Endothelial cell of umbilical vein (primary cell): ENCODE measurements at regions of chr3 and their contacts with region 1.

Region 1: DNA sequence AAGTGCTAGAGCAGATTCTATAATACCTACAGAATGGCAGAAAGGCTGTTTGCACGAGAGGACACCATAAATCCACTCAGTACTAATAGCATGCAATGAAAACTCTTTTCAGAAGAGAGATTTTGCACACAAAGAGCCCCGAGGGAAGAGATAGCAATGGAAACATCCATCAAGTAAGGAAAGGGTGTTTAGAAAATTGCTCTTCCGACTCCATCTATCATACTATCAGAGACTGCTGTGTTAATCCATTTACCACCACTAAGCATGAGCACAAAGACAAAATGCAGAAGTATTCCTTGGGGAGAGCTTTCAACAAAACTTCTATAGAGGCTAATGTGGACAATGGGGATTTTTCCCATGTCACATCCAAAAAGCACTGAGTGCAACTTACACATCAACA is 72.1 kb upstream of the PLAAT1 start:
- DNase-seq: no peak
- H3K4me3 ChIP-seq: no peak overlapping the region
- H3K27ac ChIP-seq: no peak overlapping the region
- H3K4me1 ChIP-seq: no peaks in the 10 kb centered on the region
- H3K27me3 ChIP-seq: peaks cover 0 to 2% of the 10 kb centered on the region in 2 experiments
- CTCF ChIP-seq: no peak
- POLR2A ChIP-seq: no peak

Region 2: GRCh38 chr3:192655040-192655439 is 513.9 kb before region 1 on chr3:
- CTCF ChIA-PET with region 1: no interaction called
- POLR2A ChIA-PET with region 1: no interaction called
- dilution Hi-C with region 1: no loop called
- intact Hi-C with region 1: no loop called
- DNase-seq: no peak
- H3K4me3 ChIP-seq: no peak overlapping the region
- H3K27ac ChIP-seq: no peak overlapping the region
- H3K4me1 ChIP-seq: no peaks in the 10 kb centered on the region
- H3K27me3 ChIP-seq: no peaks in the 10 kb centered on the region
- CTCF ChIP-seq: no peak
- POLR2A ChIP-seq: no peak

Region 3: GRCh38 chr3:193157051-193157450 is 11.9 kb before region 1 on chr3:
- CTCF ChIA-PET with region 1: interaction called, 3 read pairs
- POLR2A ChIA-PET with region 1: no interaction called
- dilution Hi-C with region 1: no loop called
- intact Hi-C with region 1: loop called (anchors 1 kb)
- DNase-seq: no peak
- H3K4me3 ChIP-seq: no peak overlapping the region
- H3K27ac ChIP-seq: no peak overlapping the region
- H3K4me1 ChIP-seq: no peaks in the 10 kb centered on the region
- H3K27me3 ChIP-seq: no peaks in the 10 kb centered on the region
- CTCF ChIP-seq: no peak
- POLR2A ChIP-seq: no peak